ENCODE measurements at regions of chr6 and their contacts with region 1.

Region 1: DNA sequence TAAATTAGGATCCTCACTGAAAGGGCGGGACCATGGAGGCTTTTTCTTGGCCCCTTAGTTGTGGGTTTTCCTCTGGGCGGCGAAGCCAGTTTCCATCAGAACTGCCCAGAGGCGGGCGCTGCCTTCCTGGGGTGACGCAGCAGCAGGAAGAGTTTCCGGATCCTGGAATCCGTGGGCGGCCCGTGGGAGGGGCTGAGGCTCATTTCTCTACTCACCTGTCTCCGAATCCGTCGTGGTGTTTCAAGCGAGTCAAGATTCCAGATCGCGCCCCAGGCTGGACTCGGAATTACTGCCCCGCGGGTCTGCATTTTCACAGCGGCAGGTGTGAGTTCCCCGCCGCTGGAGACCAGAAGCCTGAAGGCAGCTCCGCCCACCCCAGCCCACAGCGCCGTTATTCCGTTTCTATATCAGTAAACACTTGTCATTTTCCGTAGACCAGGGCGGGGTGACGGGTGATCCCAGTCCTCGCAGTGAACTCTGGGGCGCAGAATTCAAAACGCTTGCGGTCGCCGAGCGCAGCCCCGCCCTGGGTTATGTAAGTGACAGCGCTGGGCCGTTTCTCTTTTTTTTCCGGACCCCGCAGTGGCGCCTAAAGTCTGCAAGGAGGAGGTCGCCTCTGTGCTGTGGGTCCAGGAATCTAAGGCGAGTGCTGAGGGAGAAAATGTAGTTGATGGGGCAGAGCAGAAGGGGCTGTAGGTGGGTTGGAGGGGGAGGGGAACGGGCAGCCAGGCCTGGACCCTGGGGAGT is 27.2 kb upstream of the POU5F1 start:
- DNase-seq: peak; percentile 99
- ATAC-seq: peak; percentile 81
- H3K4me3 Mint-ChIP-seq: peak overlapping the region; percentile 80
- H3K27ac Mint-ChIP-seq: peak overlapping the region; percentile 96
- H3K4me1 Mint-ChIP-seq: peaks cover 49% of the 10 kb centered on the region
- H3K27me3 Mint-ChIP-seq: no peaks in the 10 kb centered on the region
- CTCF ChIP-seq: no peak

Region 2: GRCh38 chr6:31128093-31128676 is 69.5 kb before region 1 on chr6:
- CTCF ChIA-PET with region 1: interaction called, 12 read pairs
- POLR2A ChIA-PET with region 1: no interaction called
- intact Hi-C with region 1: no loop called
- DNase-seq: peak; percentile 88
- ATAC-seq: peak; percentile 91
- H3K4me3 Mint-ChIP-seq: no peak overlapping the region
- H3K27ac Mint-ChIP-seq: no peak overlapping the region
- H3K4me1 Mint-ChIP-seq: peaks cover 2% of the 10 kb centered on the region
- H3K27me3 Mint-ChIP-seq: peaks cover 2% of the 10 kb centered on the region
- CTCF ChIP-seq: peak; percentile 73

Region 3: DNA sequence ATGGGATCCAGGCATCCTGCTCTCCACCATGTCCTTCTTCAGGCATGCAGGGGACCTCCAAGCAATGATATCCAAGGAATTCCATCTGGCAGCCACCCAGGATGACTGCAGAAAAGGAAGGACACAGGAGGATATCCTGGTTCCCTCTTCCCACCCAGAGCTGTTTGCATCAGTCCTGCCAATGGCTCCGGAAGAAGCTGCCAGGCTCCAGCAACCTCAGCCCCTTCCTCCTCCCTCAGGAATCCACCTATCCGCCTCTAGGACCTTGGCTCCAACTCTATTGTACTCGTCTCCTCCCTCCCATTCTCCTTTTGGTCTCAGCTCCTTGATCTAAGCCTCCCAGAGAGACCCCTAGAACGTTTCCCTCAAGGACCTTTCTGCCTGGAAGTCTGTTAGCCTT is 58.1 kb before region 1 on chr6:
- CTCF ChIA-PET with region 1: interaction called, 23 read pairs
- POLR2A ChIA-PET with region 1: interaction called, 10 read pairs
- intact Hi-C with region 1: loop called (anchors 1 kb)
- DNase-seq: no peak
- ATAC-seq: no peak
- H3K4me3 Mint-ChIP-seq: no peak overlapping the region
- H3K27ac Mint-ChIP-seq: no peak overlapping the region
- H3K4me1 Mint-ChIP-seq: peaks cover 4% of the 10 kb centered on the region
- H3K27me3 Mint-ChIP-seq: no peaks in the 10 kb centered on the region
- CTCF ChIP-seq: no peak

Region 4: DNA sequence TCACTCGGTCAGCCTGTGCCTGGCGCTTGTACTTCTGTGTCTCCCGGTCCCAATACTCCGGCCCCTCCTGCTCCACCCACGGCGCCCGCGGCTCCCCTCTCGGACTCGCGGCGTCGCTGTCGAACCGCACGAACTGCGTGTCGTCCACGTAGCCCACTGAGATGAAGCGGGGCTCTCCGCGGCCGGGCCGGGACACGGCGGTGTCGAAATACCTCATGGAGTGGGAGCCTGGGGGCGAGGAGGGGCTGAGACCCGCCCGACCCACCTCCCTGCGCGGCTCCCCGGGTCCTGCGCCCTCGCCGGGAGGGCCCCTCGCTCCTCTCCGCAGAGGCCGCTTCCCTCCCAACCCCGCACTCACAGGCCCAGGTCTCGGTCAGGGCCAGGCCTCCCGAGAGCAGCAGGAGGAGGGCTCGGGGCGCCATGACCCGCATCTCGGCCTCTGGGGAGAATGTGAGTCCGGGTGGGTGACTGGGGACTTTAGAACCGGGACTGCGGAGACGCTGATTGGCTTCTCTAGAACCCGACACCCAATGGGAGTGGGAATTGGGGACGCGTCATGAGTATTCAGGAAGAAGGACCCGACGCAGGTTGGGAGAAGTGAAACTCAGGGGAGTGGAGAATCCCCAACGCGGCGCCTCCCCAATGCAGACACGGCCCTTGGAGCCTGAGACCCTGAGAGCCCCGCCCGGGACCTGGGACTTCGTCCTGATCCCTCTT is 74.1 kb after region 1 on chr6 and contains the start of gene HLA-C:
- CTCF ChIA-PET with region 1: interaction called, 3 read pairs
- POLR2A ChIA-PET with region 1: interaction called, 9 read pairs
- intact Hi-C with region 1: loop called (anchors 5 kb)
- DNase-seq: peak; percentile 93
- ATAC-seq: peak; percentile 89
- H3K4me3 Mint-ChIP-seq: peak within 1 kb of the TSS; percentile 90
- H3K27ac Mint-ChIP-seq: peak within 1 kb of the TSS; percentile 99
- H3K4me1 Mint-ChIP-seq: peaks cover 42% of the 10 kb centered on the region
- H3K27me3 Mint-ChIP-seq: no peaks in the 10 kb centered on the region
- CTCF ChIP-seq: no peak
- total RNA-seq, gene HLA-C: 833 to 860 TPM

Region 5: DNA sequence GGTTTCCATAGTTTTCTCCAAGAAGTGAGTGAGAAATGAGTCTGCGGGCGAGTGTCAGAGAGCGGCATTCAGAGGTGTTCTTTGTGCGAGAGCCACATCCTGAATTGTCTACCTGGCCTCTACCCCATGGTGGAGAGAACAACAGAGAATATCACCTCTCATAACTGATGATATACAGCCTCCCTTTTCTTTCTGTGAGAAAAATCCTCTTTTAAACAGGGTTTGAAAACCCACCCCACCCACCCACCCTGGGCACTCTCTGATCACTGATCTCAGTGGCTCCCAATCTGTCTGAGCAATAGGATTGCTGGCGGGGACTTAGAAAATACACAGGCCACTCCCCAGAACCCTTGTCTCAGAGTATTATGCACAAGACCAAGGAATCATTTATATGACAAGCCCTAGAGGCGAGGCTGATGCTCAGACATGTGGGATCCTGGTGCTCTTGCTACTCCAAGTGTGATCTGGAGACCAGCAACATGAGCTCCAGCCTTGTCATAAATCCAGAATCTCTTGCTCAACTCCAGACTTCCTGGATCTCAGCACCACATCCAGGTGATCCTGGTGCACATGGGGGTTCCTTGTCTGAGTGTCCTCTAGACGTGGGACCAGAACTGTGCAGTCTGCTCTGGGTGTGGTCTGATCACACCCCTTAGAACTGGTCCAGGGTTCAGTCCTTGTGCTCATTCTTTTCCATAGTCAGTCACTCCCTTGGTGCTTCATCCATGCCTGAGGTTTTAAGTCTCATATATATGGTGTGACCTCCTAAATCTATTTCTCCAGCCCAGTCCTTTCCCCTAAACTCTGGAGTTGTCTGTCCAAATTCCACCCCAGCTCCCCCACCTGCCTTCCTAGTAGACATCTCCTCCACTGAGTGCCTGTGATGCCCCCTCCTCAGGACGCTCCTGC is 153.9 kb after region 1 on chr6:
- CTCF ChIA-PET with region 1: no interaction called
- POLR2A ChIA-PET with region 1: interaction called, 15 read pairs
- intact Hi-C with region 1: loop called (anchors 5 kb)
- DNase-seq: peak; percentile 39
- ATAC-seq: peak; percentile 48
- H3K4me3 Mint-ChIP-seq: peak overlapping the region; percentile 90
- H3K27ac Mint-ChIP-seq: peak overlapping the region; percentile 62
- H3K4me1 Mint-ChIP-seq: peaks cover 45% of the 10 kb centered on the region
- H3K27me3 Mint-ChIP-seq: no peaks in the 10 kb centered on the region
- CTCF ChIP-seq: no peak